Cardiac septum (tissue), 1 donor: ENCODE measurements at regions of chr19 and their contacts with region 1.

Region 1: GRCh38 chr19:33302175-33302973 is at the start of gene CEBPA:
- DNase-seq: peak; percentile 92
- total RNA-seq, gene CEBPA: 2.3 TPM

Region 2: GRCh38 chr19:33373701-33374421 is 71.5 kb after region 1 on chr19 and contains the start of gene CEBPG:
- intact Hi-C with region 1: loop called (anchors 1 kb)
- DNase-seq: no peak
- total RNA-seq, gene CEBPG: 17.3 TPM

Region 3: DNA sequence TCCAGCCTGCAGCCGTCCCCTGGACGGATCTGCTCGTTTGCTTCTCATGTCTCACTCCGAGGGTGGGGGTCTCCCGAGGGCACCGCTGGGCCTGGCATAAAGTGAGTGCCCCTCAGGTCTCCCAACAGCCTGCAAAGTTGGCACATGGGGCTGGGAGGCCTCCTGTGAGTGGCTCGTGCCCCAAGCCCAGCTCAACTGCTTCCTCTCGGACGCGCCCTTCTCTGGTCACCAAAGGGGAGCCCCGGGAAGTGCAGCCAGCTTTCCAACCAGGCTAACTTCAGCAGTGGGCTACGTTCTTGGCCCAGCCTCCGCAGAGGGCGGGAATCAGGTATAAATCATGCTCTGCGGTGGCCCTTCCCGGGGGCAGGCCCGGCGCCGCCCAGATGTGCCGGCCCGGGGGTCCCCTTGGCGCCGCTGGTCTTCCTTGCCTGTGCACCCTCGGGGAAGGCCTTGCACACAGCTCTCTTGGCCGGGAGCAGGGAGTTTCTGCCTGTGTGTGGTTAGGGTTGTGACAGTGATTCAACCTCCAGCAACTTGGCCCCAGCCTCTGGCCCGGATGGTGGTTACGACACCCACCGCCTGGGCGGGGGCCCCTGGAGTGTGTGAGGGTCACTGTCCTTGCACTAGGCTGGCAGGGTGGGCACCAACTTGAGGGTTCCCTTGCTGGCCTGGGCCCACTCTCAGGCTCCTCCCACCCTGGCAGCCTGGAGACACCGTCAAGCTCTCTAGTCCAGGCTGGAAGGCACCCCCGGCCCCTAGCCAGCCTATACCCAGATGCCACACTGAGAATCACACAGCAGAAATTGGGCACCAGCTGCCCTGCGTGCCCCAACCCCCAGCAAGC is 91.9 kb after region 1 on chr19:
- intact Hi-C with region 1: loop called (anchors 5 kb)
- DNase-seq: peak; percentile 75